ENCODE measurements at regions of chr15 and their contacts with region 1.

Region 1: GRCh38 chr15:48507416-48508065 is 138.0 kb downstream of the FBN1 start:
- DNase-seq: peak; percentile 39
- CTCF ChIP-seq: peak; percentile 63

Region 2: GRCh38 chr15:48493084-48493762 is 14.3 kb before region 1 on chr15:
- CTCF ChIA-PET with region 1: interaction called, 12 read pairs
- POLR2A ChIA-PET with region 1: no interaction called
- DNase-seq: no peak
- CTCF ChIP-seq: no peak

Measured in GM10248 (cell line).